PC-9 (cell line): ENCODE measurements at regions of chr13 and their contacts with region 1.

Region 1: GRCh38 chr13:38686577-38687245 is at the start of gene FREM2:
- DNase-seq: peak; percentile 51 to 64
- H3K4me3 ChIP-seq: peak within 1 kb of the TSS; percentile 56
- H3K27ac ChIP-seq: 0 out of 2 replicates have a peak within 1 kb of the TSS, but pooled peaks have one; percentile 9
- H3K4me1 ChIP-seq: peaks cover 16% of the 10 kb centered on the region
- H3K27me3 ChIP-seq: no peaks in the 10 kb centered on the region
- CTCF ChIP-seq: no peak
- total RNA-seq, gene FREM2: 0.53 and 0.65 TPM in 2 replicates

Region 2: GRCh38 chr13:37640499-37640898 is 1046.2 kb before region 1 on chr13:
- CTCF ChIA-PET with region 1: no interaction called
- POLR2A ChIA-PET with region 1: no interaction called
- intact Hi-C with region 1: loop called (anchors 10 kb)
- DNase-seq: peak in 1 of 2 experiments; percentile 7
- H3K4me3 ChIP-seq: no peak overlapping the region
- H3K27ac ChIP-seq: no peak overlapping the region
- H3K4me1 ChIP-seq: no peaks in the 10 kb centered on the region
- H3K27me3 ChIP-seq: no peaks in the 10 kb centered on the region
- CTCF ChIP-seq: peak; percentile 69

Region 3: DNA sequence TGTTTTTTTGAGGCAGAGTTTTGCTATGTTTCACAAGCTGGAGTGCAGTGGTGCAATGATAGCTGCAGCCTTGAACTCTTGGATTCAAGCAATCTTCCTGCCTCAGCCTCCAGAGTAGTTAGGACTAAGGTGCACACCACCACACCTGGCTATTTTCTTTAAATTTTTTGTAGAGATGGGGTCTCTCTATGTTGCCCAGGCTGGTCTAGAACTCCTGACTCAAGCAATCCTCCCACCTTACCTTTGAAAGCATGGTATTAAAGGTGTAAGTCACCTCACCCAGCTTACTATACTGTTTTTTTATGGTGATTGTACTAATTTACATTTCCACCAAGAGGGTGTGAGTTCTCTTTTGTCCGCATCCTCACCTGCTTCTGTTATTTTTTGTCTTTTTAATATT is 110.2 kb after region 1 on chr13:
- CTCF ChIA-PET with region 1: no interaction called
- POLR2A ChIA-PET with region 1: interaction called, 10 read pairs
- intact Hi-C with region 1: no loop called
- DNase-seq: no peak
- H3K4me3 ChIP-seq: no peak overlapping the region
- H3K27ac ChIP-seq: no peak overlapping the region
- H3K4me1 ChIP-seq: no peaks in the 10 kb centered on the region
- H3K27me3 ChIP-seq: no peaks in the 10 kb centered on the region
- CTCF ChIP-seq: no peak

Region 4: DNA sequence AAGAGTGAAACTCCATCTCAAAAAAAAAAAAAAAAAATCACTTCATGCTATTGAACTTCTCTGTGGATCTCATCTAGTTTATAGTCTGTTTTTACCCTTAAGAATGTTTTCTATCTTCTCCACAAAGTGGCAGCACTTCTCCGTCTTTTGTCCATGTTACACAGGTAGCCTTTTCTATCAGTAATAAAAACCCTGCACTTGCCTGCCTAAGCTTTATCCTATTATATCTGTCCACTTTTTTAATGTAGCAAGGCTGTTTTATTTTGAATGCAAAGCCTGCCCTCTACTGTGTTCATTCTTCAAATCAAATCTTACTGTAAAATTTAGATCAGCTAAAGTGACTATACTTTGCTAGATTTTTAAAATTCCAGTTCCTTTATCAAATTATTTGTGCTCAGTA is 179.9 kb after region 1 on chr13:
- CTCF ChIA-PET with region 1: interaction called, 10 read pairs
- POLR2A ChIA-PET with region 1: no interaction called
- intact Hi-C with region 1: loop called (anchors 10 kb)
- DNase-seq: no peak
- H3K4me3 ChIP-seq: no peak overlapping the region
- H3K27ac ChIP-seq: no peak overlapping the region
- H3K4me1 ChIP-seq: no peaks in the 10 kb centered on the region
- H3K27me3 ChIP-seq: no peaks in the 10 kb centered on the region
- CTCF ChIP-seq: no peak

Region 5: DNA sequence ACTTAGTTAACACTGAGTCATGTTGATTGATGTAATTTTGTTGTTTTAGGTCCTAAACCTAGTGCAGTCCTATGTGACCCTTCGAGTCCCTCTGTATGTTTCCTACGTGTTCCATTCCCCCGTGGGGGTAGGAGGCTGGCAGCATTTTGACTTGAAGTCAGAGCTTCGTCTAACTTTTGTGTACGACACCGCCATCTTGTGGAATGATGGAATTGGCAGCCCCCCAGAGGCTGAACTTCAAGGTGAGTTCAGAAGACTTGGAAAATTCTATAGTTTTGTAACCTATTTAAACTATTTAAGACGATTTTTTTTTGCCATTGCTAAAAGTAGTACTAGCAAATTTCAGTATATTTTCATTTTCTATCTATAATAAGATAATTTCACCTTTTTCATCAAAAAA is 186.0 kb after region 1 on chr13:
- CTCF ChIA-PET with region 1: interaction called, 10 read pairs
- POLR2A ChIA-PET with region 1: no interaction called
- intact Hi-C with region 1: loop called (anchors 10 kb)
- DNase-seq: peak in 1 of 2 experiments; percentile 42
- H3K4me3 ChIP-seq: no peak overlapping the region
- H3K27ac ChIP-seq: no peak overlapping the region
- H3K4me1 ChIP-seq: no peaks in the 10 kb centered on the region
- H3K27me3 ChIP-seq: no peaks in the 10 kb centered on the region
- CTCF ChIP-seq: peak; percentile 69

Region 6: GRCh38 chr13:38914070-38914469 is 227.4 kb after region 1 on chr13:
- CTCF ChIA-PET with region 1: interaction called, 3 read pairs
- POLR2A ChIA-PET with region 1: no interaction called
- intact Hi-C with region 1: loop called (anchors 2 kb)
- DNase-seq: peak in 1 of 2 experiments; percentile 25
- H3K4me3 ChIP-seq: no peak overlapping the region
- H3K27ac ChIP-seq: no peak overlapping the region
- H3K4me1 ChIP-seq: no peaks in the 10 kb centered on the region
- H3K27me3 ChIP-seq: no peaks in the 10 kb centered on the region
- CTCF ChIP-seq: no peak